Activated CD8-positive, alpha-beta T cell treated with anti-CD3 and anti-CD28 coated beads for 36 hours (primary cell): ENCODE measurements at regions of chr2 and their contacts with region 1.

Region 1: GRCh38 chr2:215311625-215312396 is at the start of gene ATIC:
- DNase-seq: peak; percentile 95
- ATAC-seq: peak; percentile 96
- H3K4me3 Mint-ChIP-seq: peak within 1 kb of the TSS; percentile 86
- H3K27ac Mint-ChIP-seq: peak within 1 kb of the TSS; percentile 93
- H3K4me1 Mint-ChIP-seq: peaks cover 28% of the 10 kb centered on the region
- H3K27me3 Mint-ChIP-seq: no peaks in the 10 kb centered on the region
- CTCF ChIP-seq: no peak
- total RNA-seq, gene ATIC: 309 to 319 TPM

Region 2: DNA sequence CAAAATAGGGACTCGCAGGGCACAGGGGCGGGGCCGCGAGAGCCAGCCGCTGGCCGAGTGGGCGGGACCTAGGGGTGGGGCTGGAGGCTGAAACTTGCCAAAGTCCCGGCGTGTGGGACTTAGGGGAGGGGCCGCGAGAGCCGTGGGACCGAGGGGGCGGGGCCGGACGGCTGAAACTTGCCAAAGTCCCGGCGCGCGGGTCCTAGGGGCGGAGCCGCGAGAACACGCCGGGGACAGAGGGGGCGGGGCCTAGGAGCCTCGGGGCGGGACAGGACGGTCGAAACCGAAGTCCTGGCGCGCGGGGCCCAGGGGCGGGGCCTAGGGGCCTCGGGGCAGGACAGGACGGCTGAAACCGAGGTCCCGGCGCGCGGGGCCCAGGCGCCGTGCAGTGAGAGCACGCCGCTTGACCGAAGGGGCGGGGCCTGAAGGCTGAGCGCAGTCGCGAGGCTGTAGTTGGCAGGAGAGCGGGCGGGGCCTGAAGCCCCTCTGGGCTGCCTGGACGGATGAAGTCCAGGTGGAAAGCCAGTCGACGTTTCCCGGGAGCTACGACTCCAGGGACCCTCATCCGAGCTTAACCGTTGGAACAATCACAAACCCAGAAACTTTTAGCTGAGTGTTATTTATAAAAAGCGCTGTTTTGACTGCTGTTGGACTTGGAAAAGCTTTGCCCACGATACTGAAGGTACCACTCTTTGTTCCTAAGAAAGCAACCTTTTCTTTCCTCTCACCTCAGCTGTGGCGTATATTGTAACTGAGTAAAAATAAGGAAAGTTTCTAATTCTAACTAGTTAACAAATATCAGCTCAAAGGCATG is 501.9 kb before region 1 on chr2:
- CTCF ChIA-PET with region 1: no interaction called
- POLR2A ChIA-PET with region 1: interaction called, 10 read pairs
- intact Hi-C with region 1: loop called (anchors 5 kb)
- DNase-seq: peak; percentile 100
- ATAC-seq: peak; percentile 90
- H3K4me3 Mint-ChIP-seq: peak overlapping the region; percentile 99
- H3K27ac Mint-ChIP-seq: peak overlapping the region; percentile 88
- H3K4me1 Mint-ChIP-seq: peaks cover 30% of the 10 kb centered on the region
- H3K27me3 Mint-ChIP-seq: no peaks in the 10 kb centered on the region
- CTCF ChIP-seq: no peak

Region 3: GRCh38 chr2:215367662-215368492 is 56.1 kb after region 1 on chr2:
- CTCF ChIA-PET with region 1: no interaction called
- POLR2A ChIA-PET with region 1: no interaction called
- intact Hi-C with region 1: no loop called
- DNase-seq: no peak
- ATAC-seq: no peak
- H3K4me3 Mint-ChIP-seq: no peak overlapping the region
- H3K27ac Mint-ChIP-seq: no peak overlapping the region
- H3K4me1 Mint-ChIP-seq: no peaks in the 10 kb centered on the region
- H3K27me3 Mint-ChIP-seq: no peaks in the 10 kb centered on the region
- CTCF ChIP-seq: no peak